ENCODE measurements at regions of chr6 and their contacts with region 1.

Region 1: GRCh38 chr6:6057424-6058053 is 50.8 kb upstream of the NRN1 start:
- DNase-seq: no peak
- H3K4me3 Mint-ChIP-seq: no peak overlapping the region
- H3K27ac Mint-ChIP-seq: no peak overlapping the region
- H3K4me1 Mint-ChIP-seq: no peaks in the 10 kb centered on the region
- H3K27me3 Mint-ChIP-seq: peaks cover 18% of the 10 kb centered on the region

Region 2: DNA sequence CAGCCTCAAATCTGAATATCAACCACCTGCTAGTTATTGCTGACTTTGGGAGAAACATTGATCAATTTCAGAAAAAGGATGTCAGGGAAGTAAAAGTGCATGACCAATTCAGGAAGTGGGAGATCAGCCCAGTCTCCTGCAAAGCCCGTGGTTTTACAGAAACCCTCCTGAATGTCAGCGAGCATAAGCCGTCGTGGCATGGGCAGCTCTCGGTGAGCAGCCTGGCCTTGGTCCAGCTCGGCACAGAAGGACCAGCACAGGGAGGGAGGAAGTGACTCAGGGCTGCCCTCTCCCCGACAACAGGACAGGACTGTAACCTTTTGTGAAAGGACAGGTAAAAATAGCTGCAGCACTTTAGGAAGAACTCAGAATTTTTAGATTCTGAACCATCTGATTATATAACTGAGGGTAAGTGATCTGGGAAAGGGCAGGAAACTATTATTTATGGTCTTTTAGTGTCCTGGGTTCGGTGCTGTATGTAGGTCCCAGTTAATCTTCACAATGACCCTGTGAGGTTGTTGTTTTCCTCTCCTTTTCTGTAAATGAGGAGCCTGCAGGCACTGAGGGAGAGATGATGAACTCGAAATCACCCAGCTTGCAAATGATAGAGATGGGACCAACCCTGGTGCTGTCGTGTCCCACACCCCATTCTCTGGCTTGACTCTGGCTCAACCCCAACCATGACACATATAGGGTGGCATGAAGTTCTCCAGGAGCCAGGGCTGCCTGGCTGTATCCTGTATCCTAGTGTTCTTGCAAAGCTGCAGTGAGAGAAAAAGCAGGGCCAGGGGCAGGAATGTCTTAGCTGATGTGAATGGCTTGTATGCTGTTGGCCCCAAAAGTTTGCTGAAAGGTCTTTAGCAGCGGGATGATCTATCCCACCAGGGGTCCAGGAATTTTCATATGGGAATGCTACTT is 88.5 kb before region 1 on chr6:
- intact Hi-C with region 1: no loop called
- DNase-seq: no peak
- H3K4me3 Mint-ChIP-seq: no peak overlapping the region
- H3K27ac Mint-ChIP-seq: no peak overlapping the region
- H3K4me1 Mint-ChIP-seq: no peaks in the 10 kb centered on the region
- H3K27me3 Mint-ChIP-seq: peaks cover 11% of the 10 kb centered on the region

Region 3: GRCh38 chr6:6315660-6316059 is 258.1 kb after region 1 on chr6:
- intact Hi-C with region 1: loop called (anchors 1 kb)
- DNase-seq: no peak
- H3K4me3 Mint-ChIP-seq: no peak overlapping the region
- H3K27ac Mint-ChIP-seq: no peak overlapping the region
- H3K4me1 Mint-ChIP-seq: no peaks in the 10 kb centered on the region
- H3K27me3 Mint-ChIP-seq: peaks cover 32% of the 10 kb centered on the region

Region 4: GRCh38 chr6:6686748-6687601 is 629.4 kb after region 1 on chr6:
- intact Hi-C with region 1: no loop called
- DNase-seq: peak; percentile 19
- H3K4me3 Mint-ChIP-seq: peak overlapping the region; percentile 35
- H3K27ac Mint-ChIP-seq: no peak overlapping the region
- H3K4me1 Mint-ChIP-seq: peaks cover 54% of the 10 kb centered on the region
- H3K27me3 Mint-ChIP-seq: peaks cover 6% of the 10 kb centered on the region

Measured in activated T-helper 1 cell treated with anti-CD3 and anti-CD28 coated beads, Interleukin-12 subunit alpha, Interleukin-12 subunit beta, Interleukin-2, Interleukin-4 antibody, amounts not matched to agents 30 ng/mL and 10 ng/mL and 1 ng/mL, durations not matched to agents 14 hours and 24 hours and 36 hours (primary cell).